Activated CD8-positive, alpha-beta T cell treated with anti-CD3 and anti-CD28 coated beads, Interleukin-2, amount 10 ng/mL, durations not matched to agents 7 days and 5 days (primary cell): ENCODE measurements at regions of chr11 and their contacts with region 1.

Region 1: DNA sequence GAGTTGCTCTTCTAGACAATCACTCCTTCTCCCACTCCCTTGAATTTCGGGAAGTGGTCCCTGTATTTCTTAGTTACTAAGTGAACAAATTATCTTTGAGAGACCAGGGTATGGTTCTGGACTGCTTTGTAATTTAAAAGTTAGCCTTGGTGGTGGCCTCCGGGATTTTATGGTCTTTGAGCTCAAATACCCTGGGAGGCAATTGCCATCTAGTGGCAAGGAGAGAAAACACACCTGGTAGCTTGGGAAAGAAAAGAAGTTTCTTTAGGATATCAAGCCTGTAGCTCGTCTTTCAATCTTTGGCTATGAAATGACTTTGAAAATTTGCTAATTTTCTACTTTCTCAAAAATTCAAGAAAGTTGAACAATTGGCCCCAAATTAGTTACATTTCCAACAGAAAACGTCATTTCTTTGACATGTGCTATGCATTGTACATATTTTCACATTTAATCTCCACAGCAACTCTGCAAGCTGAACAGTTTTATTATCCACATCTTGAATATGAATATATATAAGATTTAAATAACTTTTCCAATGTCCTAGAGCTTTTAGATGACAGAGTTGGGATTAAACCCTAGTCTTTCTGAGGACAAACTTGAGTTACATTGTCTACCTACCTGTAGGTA is 39.1 kb downstream of the MMP27 start:
- DNase-seq: peak; percentile 38
- ATAC-seq: peak; percentile 36
- H3K4me3 Mint-ChIP-seq: no peak overlapping the region
- H3K27ac Mint-ChIP-seq: no peak overlapping the region
- H3K4me1 Mint-ChIP-seq: no peaks in the 10 kb centered on the region
- H3K27me3 Mint-ChIP-seq: peaks cover 19% of the 10 kb centered on the region

Region 2: GRCh38 chr11:102367364-102367763 is 299.1 kb before region 1 on chr11:
- CTCF ChIA-PET with region 1: interaction called, 16 read pairs
- POLR2A ChIA-PET with region 1: no interaction called
- DNase-seq: no peak
- ATAC-seq: peak; percentile 64
- H3K4me3 Mint-ChIP-seq: no peak overlapping the region
- H3K27ac Mint-ChIP-seq: peak overlapping the region; percentile 37
- H3K4me1 Mint-ChIP-seq: peaks cover 29% of the 10 kb centered on the region
- H3K27me3 Mint-ChIP-seq: no peaks in the 10 kb centered on the region

Region 3: GRCh38 chr11:102647430-102647829 is 19.0 kb before region 1 on chr11:
- CTCF ChIA-PET with region 1: interaction called, 14 read pairs
- POLR2A ChIA-PET with region 1: no interaction called
- DNase-seq: no peak
- ATAC-seq: no peak
- H3K4me3 Mint-ChIP-seq: no peak overlapping the region
- H3K27ac Mint-ChIP-seq: no peak overlapping the region
- H3K4me1 Mint-ChIP-seq: no peaks in the 10 kb centered on the region
- H3K27me3 Mint-ChIP-seq: peaks cover 9% of the 10 kb centered on the region

Region 4: GRCh38 chr11:102653744-102654291 is 12.6 kb before region 1 on chr11:
- CTCF ChIA-PET with region 1: interaction called, 14 read pairs
- POLR2A ChIA-PET with region 1: no interaction called
- DNase-seq: no peak
- ATAC-seq: no peak
- H3K4me3 Mint-ChIP-seq: no peak overlapping the region
- H3K27ac Mint-ChIP-seq: no peak overlapping the region
- H3K4me1 Mint-ChIP-seq: no peaks in the 10 kb centered on the region
- H3K27me3 Mint-ChIP-seq: peaks cover 13% of the 10 kb centered on the region

Region 5: DNA sequence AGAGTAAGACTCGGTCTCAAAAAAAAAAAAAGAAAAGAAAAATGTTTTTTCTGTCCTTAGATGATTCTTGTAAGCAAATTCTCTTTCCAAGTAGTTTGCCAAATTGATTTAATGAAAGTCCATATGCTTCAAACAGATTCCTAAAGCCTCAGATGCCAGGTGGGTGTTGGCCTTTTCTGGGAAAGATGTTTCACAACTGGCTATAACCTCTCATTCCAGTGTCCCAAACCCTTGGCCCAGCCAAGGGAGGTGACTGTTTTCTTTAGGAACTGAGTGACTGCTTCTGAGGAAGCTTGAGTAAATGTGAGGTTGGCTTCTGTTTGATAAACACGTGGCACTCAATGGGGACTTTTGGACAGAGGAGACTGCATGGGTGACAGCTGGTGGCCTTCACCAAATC is 11.6 kb after region 1 on chr11:
- CTCF ChIA-PET with region 1: interaction called, 20 read pairs
- POLR2A ChIA-PET with region 1: no interaction called
- DNase-seq: no peak
- ATAC-seq: no peak
- H3K4me3 Mint-ChIP-seq: no peak overlapping the region
- H3K27ac Mint-ChIP-seq: no peak overlapping the region
- H3K4me1 Mint-ChIP-seq: no peaks in the 10 kb centered on the region
- H3K27me3 Mint-ChIP-seq: peaks cover 15% of the 10 kb centered on the region

Region 6: DNA sequence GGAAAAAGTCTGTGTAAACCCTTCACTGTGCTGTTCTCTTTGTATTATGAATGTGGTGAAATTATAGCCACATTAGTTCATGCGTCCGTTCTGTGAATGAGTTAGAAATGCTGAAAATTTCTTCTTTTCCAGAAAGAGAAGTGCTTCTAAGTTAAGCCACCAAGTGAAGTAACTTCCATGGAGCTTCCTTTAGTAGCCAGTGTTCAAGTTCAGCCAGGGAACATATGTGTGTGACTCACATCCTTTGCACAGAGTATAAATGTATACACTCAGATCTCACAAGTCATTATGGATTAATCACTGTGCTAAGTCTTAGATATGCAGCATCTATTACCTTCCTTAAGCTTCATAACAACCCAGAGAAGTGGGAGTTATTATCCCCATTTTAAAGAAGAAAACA is 61.4 kb after region 1 on chr11:
- CTCF ChIA-PET with region 1: no interaction called
- POLR2A ChIA-PET with region 1: no interaction called
- DNase-seq: no peak
- ATAC-seq: no peak
- H3K4me3 Mint-ChIP-seq: no peak overlapping the region
- H3K27ac Mint-ChIP-seq: no peak overlapping the region
- H3K4me1 Mint-ChIP-seq: no peaks in the 10 kb centered on the region
- H3K27me3 Mint-ChIP-seq: no peaks in the 10 kb centered on the region